ENCODE measurements at regions of chr16 and their contacts with region 1.

Region 1: GRCh38 chr16:85610508-85611332 is 2.4 kb upstream of the GSE1 start:
- DNase-seq: peak; percentile 78 to 95 (median 83)
- ATAC-seq: peak; percentile 59
- H3K4me3 ChIP-seq: peak overlapping the region; percentile 85
- H3K27ac ChIP-seq: peak overlapping the region; percentile 99
- H3K4me1 ChIP-seq: peaks cover 58 to 87% of the 10 kb centered on the region in 2 experiments
- H3K27me3 ChIP-seq: no peaks in the 10 kb centered on the region
- CTCF ChIP-seq: peak; percentile 97 to 100 (median 99)
- EP300 ChIP-seq: peak; percentile 60
- POLR2A ChIP-seq: 0 out of 2 replicates have a peak, but pooled peaks have one; percentile 20
- RAD21 ChIP-seq: peak; percentile 96 to 97

Region 2: DNA sequence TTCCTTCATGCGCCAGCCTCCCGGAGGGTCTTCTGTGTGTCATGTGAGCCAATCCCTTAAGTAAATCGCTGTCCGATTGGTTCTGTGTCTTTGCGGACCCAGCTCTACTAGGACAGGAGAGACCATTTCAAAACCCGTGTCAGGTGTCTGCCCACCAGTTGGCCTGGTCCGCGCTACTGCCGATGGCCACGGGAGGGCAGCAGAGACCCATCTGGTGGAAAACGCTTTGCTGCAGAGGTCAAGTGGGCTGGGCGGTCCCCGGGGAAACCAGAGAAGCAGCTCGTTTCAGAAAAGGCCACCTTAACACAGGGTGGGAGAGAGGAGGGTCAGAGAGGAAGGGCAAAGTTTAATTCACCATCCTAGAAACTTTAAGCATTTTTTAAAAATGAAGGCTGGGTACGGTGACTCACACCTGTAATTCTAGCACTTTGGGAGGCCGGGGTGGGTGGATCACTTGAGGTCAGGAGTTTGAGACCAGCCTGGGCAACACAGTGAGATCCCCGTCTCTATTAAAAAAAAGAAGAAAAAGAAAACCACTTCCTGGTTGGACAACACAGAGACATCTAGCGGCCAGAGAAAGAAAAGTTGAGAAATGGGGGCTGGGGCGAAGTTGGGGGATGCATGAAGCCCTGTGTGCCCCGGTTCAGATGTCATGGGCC is 495.7 kb before region 1 on chr16:
- CTCF ChIA-PET with region 1: no interaction called
- POLR2A ChIA-PET with region 1: no interaction called
- in situ Hi-C with region 1: no loop called
- intact Hi-C with region 1: no loop called
- DNase-seq: peak; percentile 92 to 94 (median 93)
- ATAC-seq: peak; percentile 98
- H3K4me3 ChIP-seq: 0 out of 2 replicates have a peak overlapping the region, but pooled peaks have one; percentile 5
- H3K27ac ChIP-seq: peak overlapping the region; percentile 56
- H3K4me1 ChIP-seq: peaks cover 2 to 26% of the 10 kb centered on the region in 2 experiments; a peak in 2 of 5 replicates
- H3K27me3 ChIP-seq: peaks cover 0 to 28% of the 10 kb centered on the region in 2 experiments; a peak in 3 of 5 replicates
- CTCF ChIP-seq: peak; percentile 97 to 100 (median 98)
- EP300 ChIP-seq: no peak
- POLR2A ChIP-seq: no peak
- RAD21 ChIP-seq: peak; percentile 96

Region 3: GRCh38 chr16:85347213-85347591 is 263.5 kb before region 1 on chr16:
- CTCF ChIA-PET with region 1: interaction called, 11 read pairs
- POLR2A ChIA-PET with region 1: no interaction called
- in situ Hi-C with region 1: no loop called
- intact Hi-C with region 1: no loop called
- DNase-seq: peak; percentile 75 to 86 (median 80)
- ATAC-seq: peak; percentile 98
- H3K4me3 ChIP-seq: no peak overlapping the region
- H3K27ac ChIP-seq: no peak overlapping the region
- H3K4me1 ChIP-seq: peaks cover 8 to 47% of the 10 kb centered on the region in 2 experiments
- H3K27me3 ChIP-seq: no peaks in the 10 kb centered on the region; a peak in 1 of 5 replicates
- CTCF ChIP-seq: peak; percentile 90 to 96 (median 94)
- EP300 ChIP-seq: no peak
- POLR2A ChIP-seq: no peak
- RAD21 ChIP-seq: peak; percentile 94 to 97

Region 4: DNA sequence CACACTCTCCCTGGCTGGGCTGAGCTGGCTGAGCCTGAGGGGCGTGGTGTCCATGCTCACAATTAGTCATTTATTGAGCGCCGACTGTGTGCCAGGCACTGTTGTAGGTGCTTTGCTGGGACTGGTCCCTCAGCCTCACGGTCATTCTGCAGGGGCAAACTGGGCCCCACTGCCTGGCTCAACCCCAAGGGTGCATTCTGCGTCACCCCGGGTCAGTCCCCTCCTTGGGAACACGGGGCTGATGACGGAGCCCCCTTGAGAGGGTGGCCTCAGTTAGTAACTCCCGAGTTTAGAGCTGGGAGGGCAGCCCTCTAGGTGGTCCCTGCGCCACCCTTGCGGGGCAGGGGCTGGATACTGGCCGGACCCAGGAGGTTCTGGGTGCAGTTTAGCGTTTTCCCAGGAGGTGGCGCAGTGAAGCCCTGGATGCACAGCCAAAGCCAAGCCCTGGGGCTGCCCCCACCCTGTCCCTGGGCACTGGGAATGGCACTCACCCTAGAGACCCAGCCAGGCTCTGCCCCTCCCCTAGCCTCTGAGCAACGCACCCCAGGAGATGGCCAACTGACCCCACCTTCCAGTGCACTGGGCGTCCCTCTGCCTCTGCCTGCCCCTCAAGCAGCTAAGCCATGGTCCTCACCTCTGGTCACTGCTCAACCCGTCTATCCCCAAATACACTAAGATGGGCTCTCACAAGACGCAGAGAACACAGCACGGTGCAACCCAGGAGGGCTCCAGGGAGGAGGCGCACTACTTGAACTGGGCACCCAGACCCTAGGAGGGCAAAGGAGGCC is 240.8 kb before region 1 on chr16:
- CTCF ChIA-PET with region 1: no interaction called
- POLR2A ChIA-PET with region 1: no interaction called
- in situ Hi-C with region 1: no loop called
- intact Hi-C with region 1: no loop called
- DNase-seq: peak; percentile 80 to 90 (median 87)
- ATAC-seq: peak; percentile 90
- H3K4me3 ChIP-seq: no peak overlapping the region
- H3K27ac ChIP-seq: no peak overlapping the region; the same call in 2 of the 3 replicates
- H3K4me1 ChIP-seq: peaks cover 42 to 89% of the 10 kb centered on the region in 2 experiments
- H3K27me3 ChIP-seq: no peaks in the 10 kb centered on the region
- CTCF ChIP-seq: peak; percentile 89 to 96 (median 91)
- EP300 ChIP-seq: no peak; the same call in 1 of the 2 replicates
- POLR2A ChIP-seq: no peak
- RAD21 ChIP-seq: peak; percentile 84 to 90

Region 5: GRCh38 chr16:85437166-85438055 is 173.3 kb before region 1 on chr16:
- CTCF ChIA-PET with region 1: interaction called, 17 read pairs
- POLR2A ChIA-PET with region 1: interaction called, 6 read pairs
- in situ Hi-C with region 1: loop called (anchors 5 kb)
- intact Hi-C with region 1: loop called (anchors 1 kb)
- DNase-seq: peak; percentile 73 to 86 (median 80)
- ATAC-seq: peak; percentile 58
- H3K4me3 ChIP-seq: peak overlapping the region; percentile 7; the same call in 1 of the 2 replicates
- H3K27ac ChIP-seq: peak overlapping the region; percentile 72
- H3K4me1 ChIP-seq: peaks cover 26 to 57% of the 10 kb centered on the region in 2 experiments
- H3K27me3 ChIP-seq: no peaks in the 10 kb centered on the region
- CTCF ChIP-seq: peak in 1 of 3 experiments; percentile 4; a peak in 1 of 6 replicates
- EP300 ChIP-seq: 0 out of 2 replicates have a peak, but pooled peaks have one; percentile 1
- POLR2A ChIP-seq: no peak
- RAD21 ChIP-seq: peak in 1 of 2 experiments; percentile 10; a peak in 1 of 4 replicates

Region 6: DNA sequence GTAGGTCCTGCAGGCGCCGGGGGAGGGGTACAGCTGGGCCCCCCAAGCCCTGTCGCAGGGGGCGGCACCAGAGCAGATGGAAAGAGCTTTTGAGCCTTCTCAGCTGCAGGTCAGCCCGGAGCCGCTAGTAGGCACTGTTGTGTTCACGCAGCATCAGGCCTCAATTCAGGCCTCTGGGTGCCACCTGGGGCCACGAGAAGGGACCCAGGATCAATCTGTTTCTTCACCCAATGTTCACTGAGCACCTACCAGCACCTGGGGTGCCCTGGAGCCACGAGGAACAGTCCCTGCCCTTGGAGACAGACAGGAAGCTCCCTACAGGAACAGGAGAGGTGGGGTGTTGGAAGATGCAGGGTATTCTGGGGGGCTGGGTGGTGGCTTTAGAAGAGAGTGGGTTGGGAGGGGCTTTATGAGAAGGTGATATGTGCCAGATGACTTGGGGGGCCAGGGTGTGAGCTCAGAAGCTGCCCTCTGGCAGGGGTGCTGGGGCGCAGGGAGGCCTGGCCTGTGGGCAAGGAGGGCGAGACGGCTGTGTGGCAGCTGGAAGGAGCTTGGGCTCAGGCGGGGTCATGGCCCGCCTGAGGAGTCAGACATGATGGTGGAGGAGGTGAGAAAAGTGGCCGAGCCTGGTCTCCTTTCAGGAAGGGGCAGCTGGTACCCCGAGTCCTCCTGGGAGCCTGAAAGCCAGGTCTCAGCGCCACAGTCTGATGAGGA is 119.5 kb before region 1 on chr16:
- CTCF ChIA-PET with region 1: interaction called, 6 read pairs
- POLR2A ChIA-PET with region 1: interaction called, 3 read pairs
- in situ Hi-C with region 1: no loop called
- intact Hi-C with region 1: loop called (anchors 1 kb)
- DNase-seq: peak; percentile 75 to 84 (median 80)
- ATAC-seq: peak; percentile 88
- H3K4me3 ChIP-seq: no peak overlapping the region
- H3K27ac ChIP-seq: peak overlapping the region; percentile 11; the same call in 1 of the 3 replicates
- H3K4me1 ChIP-seq: peaks cover 18 to 54% of the 10 kb centered on the region in 2 experiments
- H3K27me3 ChIP-seq: no peaks in the 10 kb centered on the region
- CTCF ChIP-seq: peak; percentile 96 to 99 (median 97)
- EP300 ChIP-seq: no peak
- POLR2A ChIP-seq: no peak
- RAD21 ChIP-seq: peak; percentile 78 to 85

Region 7: GRCh38 chr16:85569615-85570212 is 41.0 kb before region 1 on chr16:
- CTCF ChIA-PET with region 1: interaction called, 15 read pairs
- POLR2A ChIA-PET with region 1: interaction called, 13 read pairs
- in situ Hi-C with region 1: no loop called
- intact Hi-C with region 1: loop called (anchors 1 kb)
- DNase-seq: peak; percentile 62 to 96 (median 79)
- ATAC-seq: peak; percentile 60
- H3K4me3 ChIP-seq: peak overlapping the region; percentile 40
- H3K27ac ChIP-seq: peak overlapping the region; percentile 97
- H3K4me1 ChIP-seq: peaks cover 90 to 98% of the 10 kb centered on the region in 2 experiments
- H3K27me3 ChIP-seq: no peaks in the 10 kb centered on the region; a peak in 1 of 5 replicates
- CTCF ChIP-seq: no peak
- EP300 ChIP-seq: peak; percentile 71; the same call in 1 of the 2 replicates
- POLR2A ChIP-seq: peak; percentile 84
- RAD21 ChIP-seq: no peak

Region 8: GRCh38 chr16:85586380-85587104 is 24.2 kb before region 1 on chr16:
- CTCF ChIA-PET with region 1: no interaction called
- POLR2A ChIA-PET with region 1: no interaction called
- in situ Hi-C with region 1: no loop called
- intact Hi-C with region 1: no loop called
- DNase-seq: no peak
- ATAC-seq: no peak
- H3K4me3 ChIP-seq: no peak overlapping the region
- H3K27ac ChIP-seq: no peak overlapping the region
- H3K4me1 ChIP-seq: peaks cover 42 to 89% of the 10 kb centered on the region in 2 experiments
- H3K27me3 ChIP-seq: no peaks in the 10 kb centered on the region; a peak in 1 of 5 replicates
- CTCF ChIP-seq: no peak
- EP300 ChIP-seq: no peak
- POLR2A ChIP-seq: no peak
- RAD21 ChIP-seq: no peak

Region 9: DNA sequence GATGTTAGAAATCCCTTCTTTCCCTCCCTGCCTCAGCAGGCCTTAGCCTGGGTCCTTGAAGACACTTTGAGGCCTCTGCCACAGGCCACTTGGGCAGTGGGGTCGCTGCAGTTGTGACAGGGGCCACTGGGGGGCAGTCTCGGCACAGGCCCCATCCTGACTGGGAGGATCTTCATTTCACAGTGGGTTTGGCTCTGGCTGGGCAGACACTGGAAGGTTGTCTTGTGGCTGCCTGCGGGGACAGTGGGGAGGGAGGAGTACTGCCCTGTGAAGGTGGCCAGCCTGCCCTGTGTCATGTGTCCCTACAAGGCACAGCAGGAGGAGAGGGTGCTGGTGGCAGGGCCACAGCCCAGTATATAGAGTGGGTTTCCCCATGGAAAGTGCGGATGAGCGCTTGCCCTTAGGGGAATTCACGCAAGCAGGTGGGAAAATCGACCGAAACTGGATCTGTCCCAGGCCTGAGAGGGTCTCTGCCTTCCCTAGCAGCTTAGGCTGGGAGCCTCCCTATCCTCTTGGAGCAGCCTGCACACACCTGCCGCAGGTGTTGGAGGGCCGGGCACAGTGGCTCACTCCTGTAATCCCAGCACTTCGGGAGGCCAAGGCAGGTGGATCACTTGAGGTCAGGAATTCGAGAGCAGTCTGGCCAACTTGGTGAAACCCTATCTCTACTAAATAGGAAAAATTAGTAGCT is 49.2 kb after region 1 on chr16:
- CTCF ChIA-PET with region 1: no interaction called
- POLR2A ChIA-PET with region 1: no interaction called
- in situ Hi-C with region 1: no loop called
- intact Hi-C with region 1: no loop called
- DNase-seq: peak; percentile 75 to 84 (median 80)
- ATAC-seq: peak; percentile 91
- H3K4me3 ChIP-seq: no peak overlapping the region
- H3K27ac ChIP-seq: no peak overlapping the region
- H3K4me1 ChIP-seq: peaks cover 0 to 33% of the 10 kb centered on the region in 2 experiments; a peak in 1 of 5 replicates
- H3K27me3 ChIP-seq: no peaks in the 10 kb centered on the region
- CTCF ChIP-seq: peak; percentile 81 to 96 (median 88)
- EP300 ChIP-seq: no peak
- POLR2A ChIP-seq: peak; percentile 49
- RAD21 ChIP-seq: peak in 1 of 2 experiments; percentile 61; a peak in 3 of 4 replicates